OCI-LY7 (cell line): ENCODE measurements at regions of chr16 and their contacts with region 1.

Region 1: GRCh38 chr16:84084570-84085270 is 32.0 kb downstream of the MBTPS1 start:
- DNase-seq: peak; percentile 86
- H3K4me3 ChIP-seq: peak overlapping the region; percentile 11
- H3K27ac ChIP-seq: peak overlapping the region; percentile 66
- H3K4me1 ChIP-seq: peaks cover 52% of the 10 kb centered on the region
- CTCF ChIP-seq: peak; percentile 94

Region 2: DNA sequence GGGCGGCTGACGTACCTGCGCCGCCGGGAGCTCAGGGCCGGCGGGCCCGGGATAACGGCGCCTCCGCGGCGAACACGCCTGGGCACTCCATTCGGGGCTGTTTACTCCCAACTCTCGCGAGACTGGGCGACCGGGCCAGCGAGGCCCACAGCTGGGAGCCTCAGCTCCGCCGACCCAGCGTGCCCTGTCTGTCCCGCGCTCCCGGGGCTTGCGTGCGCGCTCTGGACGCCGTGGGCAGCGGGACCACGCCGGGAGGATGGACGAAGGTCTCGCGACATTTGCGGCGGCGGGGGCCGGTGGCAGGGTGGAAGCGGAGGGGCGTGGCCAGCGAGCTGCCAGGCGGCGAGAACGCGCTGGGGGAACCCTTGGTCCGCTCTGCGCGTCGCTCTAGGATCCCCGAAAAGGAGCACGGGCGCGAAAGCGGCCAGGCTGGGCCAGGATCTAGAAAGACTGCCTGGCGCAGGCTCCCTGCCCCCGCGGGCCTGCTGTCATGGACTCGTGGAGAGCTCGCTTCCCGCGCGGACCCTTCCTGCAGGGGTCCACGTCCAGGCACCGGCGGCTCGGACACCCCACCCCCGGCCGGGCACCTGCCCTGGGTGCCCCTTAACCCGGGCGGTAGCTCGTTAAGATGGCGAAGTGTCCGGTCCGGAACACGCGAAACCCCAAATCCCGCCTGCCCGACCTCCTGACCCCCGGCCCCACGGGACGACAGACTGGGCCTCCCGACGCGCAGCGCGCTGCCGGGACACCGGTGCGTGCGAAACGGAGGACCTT is 32.2 kb after region 1 on chr16 and contains the start of gene MBTPS1:
- CTCF ChIA-PET with region 1: interaction called, 5 read pairs
- POLR2A ChIA-PET with region 1: interaction called, 5 read pairs
- intact Hi-C with region 1: loop called (anchors 1 kb)
- DNase-seq: peak; percentile 97
- H3K4me3 ChIP-seq: peak within 1 kb of the TSS; percentile 84
- H3K27ac ChIP-seq: peak within 1 kb of the TSS; percentile 72
- H3K4me1 ChIP-seq: peaks cover 15% of the 10 kb centered on the region
- CTCF ChIP-seq: no peak
- total RNA-seq, gene MBTPS1: 39.4 and 49.6 TPM in 2 replicates

Region 3: DNA sequence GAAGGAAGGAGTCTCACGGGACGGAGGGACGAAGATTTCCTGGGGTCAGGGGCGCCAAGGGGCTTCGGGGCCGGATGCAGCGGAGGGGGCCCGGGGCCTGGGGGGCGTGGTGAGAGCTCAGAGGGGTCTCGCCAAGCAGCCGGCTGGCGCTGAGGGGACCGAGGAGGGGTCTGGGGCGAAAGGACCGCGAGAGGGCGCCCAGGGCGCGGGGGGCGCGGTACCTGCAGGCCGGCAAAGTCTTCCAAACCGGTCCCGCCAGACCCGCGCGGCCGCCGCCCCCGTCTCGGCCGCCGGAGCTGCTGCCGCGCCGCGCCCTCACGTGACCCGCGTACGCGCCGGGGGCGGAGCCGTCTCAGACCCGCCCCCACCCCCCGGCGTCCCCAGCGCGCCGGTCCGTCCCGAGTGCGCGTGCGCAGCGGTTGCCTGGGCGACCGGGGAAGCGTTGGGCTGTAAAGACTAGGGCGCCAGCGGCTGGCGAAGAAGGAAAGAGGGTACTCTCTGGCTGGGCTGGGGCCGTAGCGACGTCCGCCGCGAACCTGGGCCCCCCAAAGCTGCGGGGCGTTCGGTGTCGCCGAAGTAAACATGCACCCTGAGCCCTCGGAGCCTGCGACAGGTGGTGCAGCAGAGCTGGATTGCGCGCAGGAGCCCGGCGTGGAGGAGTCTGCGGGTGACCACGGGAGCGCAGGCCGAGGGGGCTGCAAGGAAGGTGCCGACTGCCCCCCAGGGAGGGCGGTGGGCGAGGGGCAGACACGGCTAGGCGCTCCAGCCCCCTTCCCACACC is 60.3 kb after region 1 on chr16 and contains the starts of genes DNAAF1 and HSDL1:
- CTCF ChIA-PET with region 1: no interaction called
- POLR2A ChIA-PET with region 1: interaction called, 3 read pairs
- intact Hi-C with region 1: loop called (anchors 1 kb)
- DNase-seq: peak; percentile 92
- H3K4me3 ChIP-seq: peak within 1 kb of the TSS; percentile 74
- H3K27ac ChIP-seq: peak within 1 kb of the TSS; percentile 50
- H3K4me1 ChIP-seq: peaks cover 17% of the 10 kb centered on the region
- CTCF ChIP-seq: peak; percentile 50
- total RNA-seq, gene DNAAF1: 0.08 TPM in 1 of 2 replicates, not detected in the other
- total RNA-seq, gene HSDL1: 15.4 and 16.3 TPM in 2 replicates

Region 4: GRCh38 chr16:84175350-84176081 is 90.8 kb after region 1 on chr16:
- CTCF ChIA-PET with region 1: interaction called, 13 read pairs
- POLR2A ChIA-PET with region 1: interaction called, 3 read pairs
- intact Hi-C with region 1: loop called (anchors 1 kb)
- DNase-seq: peak; percentile 61
- H3K4me3 ChIP-seq: no peak overlapping the region
- H3K27ac ChIP-seq: no peak overlapping the region
- H3K4me1 ChIP-seq: no peaks in the 10 kb centered on the region
- CTCF ChIP-seq: peak; percentile 77

Region 5: DNA sequence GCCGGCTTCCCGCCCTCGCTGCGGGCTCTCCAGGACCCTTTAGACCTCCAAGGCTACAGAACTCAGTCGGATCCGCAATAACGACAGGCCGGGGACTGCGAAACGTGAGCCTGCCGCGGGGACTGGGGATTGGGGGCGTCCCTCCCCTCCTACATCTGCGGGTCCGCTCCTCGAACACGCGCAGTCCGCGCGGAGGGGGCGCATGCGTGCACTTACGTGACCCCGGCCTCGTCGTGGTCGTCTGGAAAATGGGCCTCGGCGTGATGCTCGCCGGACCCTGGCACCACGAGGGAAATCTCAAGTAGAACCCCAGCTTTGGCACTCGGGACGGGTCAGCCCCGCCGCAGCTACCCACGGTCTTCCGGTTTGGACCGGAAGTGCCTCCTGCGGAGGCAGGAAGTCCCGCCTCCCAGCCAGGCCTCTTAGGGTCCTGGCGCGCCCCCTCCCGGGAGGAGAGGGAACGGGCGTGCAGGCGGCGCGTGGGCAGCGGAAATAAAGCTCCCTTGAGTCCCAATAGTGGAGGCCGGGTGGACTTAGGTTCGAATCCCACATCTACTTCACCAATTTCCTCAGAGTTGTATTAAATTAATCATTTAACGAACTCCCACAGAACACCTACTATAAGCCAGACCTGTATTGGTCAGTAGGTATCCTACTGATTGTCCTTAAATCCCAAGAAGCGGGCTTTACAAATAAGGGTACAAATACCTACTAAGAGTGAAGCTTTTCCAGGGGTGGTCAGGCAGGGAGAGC is 102.1 kb after region 1 on chr16 and contains the start of gene TAF1C:
- CTCF ChIA-PET with region 1: interaction called, 11 read pairs
- POLR2A ChIA-PET with region 1: no interaction called
- intact Hi-C with region 1: loop called (anchors 1 kb)
- DNase-seq: peak; percentile 96
- H3K4me3 ChIP-seq: peak within 1 kb of the TSS; percentile 96
- H3K27ac ChIP-seq: peak within 1 kb of the TSS; percentile 40
- H3K4me1 ChIP-seq: peaks cover 9% of the 10 kb centered on the region
- CTCF ChIP-seq: peak; percentile 92
- total RNA-seq, gene TAF1C: 27.4 and 64.6 TPM in 2 replicates

Region 6: DNA sequence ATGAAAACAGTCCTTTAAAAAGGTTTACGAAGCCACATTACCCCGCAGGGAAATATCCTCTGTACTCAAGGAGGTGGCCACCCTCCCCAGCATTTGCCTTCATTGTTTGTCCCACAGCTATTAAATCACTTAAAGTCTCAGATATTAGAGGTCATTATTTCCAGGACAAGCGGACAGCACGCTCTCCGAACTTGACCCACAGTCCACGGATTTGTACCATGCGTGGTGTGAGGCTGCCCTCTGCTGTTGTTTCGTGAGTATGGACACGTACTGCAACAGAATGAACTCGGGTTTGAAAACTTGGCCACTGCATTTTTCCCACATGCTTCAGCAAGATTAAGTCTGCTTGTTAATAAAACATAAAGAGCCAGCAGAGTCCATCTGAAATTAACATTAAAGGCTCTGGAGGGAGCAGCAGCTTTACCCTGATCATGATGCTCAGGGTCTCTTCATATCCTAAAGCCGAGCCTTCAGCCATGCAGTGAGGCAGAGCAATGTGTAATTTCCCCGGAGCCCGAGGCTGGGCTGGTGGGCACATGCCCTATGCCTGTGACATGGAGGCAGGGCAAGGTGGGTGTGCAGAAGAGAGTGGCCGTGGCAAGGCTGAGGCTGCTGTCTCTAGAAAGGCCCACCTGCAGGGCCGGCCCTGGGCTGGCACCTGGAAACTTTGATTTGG is 400.0 kb after region 1 on chr16:
- CTCF ChIA-PET with region 1: no interaction called
- POLR2A ChIA-PET with region 1: no interaction called
- intact Hi-C with region 1: no loop called
- DNase-seq: peak; percentile 32
- H3K4me3 ChIP-seq: no peak overlapping the region
- H3K27ac ChIP-seq: no peak overlapping the region
- H3K4me1 ChIP-seq: no peaks in the 10 kb centered on the region
- CTCF ChIP-seq: peak; percentile 86